Endothelial cell of umbilical vein (primary cell): ENCODE measurements at regions of chr3 and their contacts with region 1.

Region 1: DNA sequence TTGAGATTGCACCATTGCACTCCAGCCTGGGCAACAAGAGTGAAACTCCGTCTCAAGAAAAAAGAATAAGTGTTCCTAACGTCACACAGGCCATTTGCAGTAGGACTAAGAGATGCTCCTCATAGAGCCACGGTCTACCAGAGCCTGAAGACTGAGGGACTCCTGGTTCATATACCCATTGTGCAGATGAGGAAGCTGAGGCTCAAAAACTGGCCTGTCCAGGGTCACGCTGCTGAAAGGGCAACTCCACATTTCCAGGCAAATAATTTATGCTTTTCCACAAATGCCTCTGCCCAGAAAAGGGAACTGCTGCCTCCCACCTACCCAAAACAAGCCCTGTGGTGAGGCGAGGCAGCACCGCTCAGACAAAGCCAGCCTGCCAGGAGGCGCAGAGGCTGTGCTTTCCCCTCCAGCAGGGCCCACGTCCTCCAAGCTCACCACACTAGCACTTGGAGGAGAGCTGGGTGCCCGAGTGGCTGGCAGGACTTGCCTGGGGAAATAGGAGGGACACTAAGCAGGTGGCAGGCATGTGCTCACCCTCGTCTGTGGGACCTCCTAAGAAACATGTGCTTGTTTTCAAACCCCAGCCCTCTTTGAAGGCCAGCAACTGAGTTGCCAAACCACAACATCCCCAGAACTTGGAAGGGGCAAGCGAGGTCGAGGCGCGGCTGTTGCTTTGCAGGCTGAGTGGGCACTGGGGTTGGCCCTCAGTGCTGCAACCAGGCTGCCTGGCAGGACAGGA is 195.6 kb downstream of the XXYLT1 start:
- DNase-seq: no peak
- H3K4me3 ChIP-seq: no peak overlapping the region
- H3K27ac ChIP-seq: no peak overlapping the region
- H3K4me1 ChIP-seq: peaks cover 7% of the 10 kb centered on the region
- H3K27me3 ChIP-seq: no peaks in the 10 kb centered on the region
- CTCF ChIP-seq: no peak
- POLR2A ChIP-seq: no peak

Region 2: DNA sequence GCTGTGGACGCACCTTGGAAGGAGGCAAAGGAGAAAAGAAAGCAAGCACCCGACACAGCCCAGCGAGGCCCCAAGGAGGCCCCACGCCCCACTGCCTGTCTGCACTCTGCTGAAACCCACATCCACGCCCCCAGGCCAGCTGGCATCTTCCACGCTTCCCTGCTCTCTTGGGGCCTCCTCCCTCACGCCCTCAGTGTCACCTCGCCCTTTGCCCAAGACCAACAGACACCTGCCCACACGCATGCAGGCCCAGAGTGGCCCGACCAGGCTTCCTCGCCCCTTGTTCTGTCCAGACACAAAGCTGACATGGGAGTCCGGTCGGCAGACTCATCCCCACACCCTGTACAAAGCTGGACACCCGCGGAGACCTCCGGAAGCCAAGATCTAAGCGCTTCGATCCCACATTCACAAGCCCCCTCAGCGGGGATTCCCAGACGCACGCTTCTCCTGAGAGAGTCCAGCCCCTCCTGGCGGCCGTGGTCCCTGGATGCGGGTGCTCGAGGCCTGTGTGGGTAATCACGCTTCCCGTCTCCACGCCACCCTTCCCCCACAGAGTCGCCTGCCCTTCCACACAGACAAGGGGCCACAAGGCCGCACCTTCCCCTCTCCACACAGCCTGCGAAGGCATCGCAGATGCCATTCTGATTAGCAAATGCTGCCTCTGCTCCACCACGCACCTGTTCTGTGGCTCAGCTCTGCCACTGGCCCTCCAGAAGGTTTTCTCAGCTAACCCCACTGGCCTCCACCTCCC is 19.0 kb after region 1 on chr3:
- CTCF ChIA-PET with region 1: no interaction called
- POLR2A ChIA-PET with region 1: no interaction called
- dilution Hi-C with region 1: no loop called
- intact Hi-C with region 1: no loop called
- DNase-seq: no peak
- H3K4me3 ChIP-seq: no peak overlapping the region
- H3K27ac ChIP-seq: no peak overlapping the region
- H3K4me1 ChIP-seq: peaks cover 7% of the 10 kb centered on the region
- H3K27me3 ChIP-seq: no peaks in the 10 kb centered on the region
- CTCF ChIP-seq: no peak
- POLR2A ChIP-seq: no peak

Region 3: GRCh38 chr3:195282961-195283360 is 207.6 kb after region 1 on chr3:
- CTCF ChIA-PET with region 1: no interaction called
- POLR2A ChIA-PET with region 1: no interaction called
- dilution Hi-C with region 1: no loop called
- intact Hi-C with region 1: no loop called
- DNase-seq: no peak
- H3K4me3 ChIP-seq: no peak overlapping the region
- H3K27ac ChIP-seq: no peak overlapping the region
- H3K4me1 ChIP-seq: peaks cover 15% of the 10 kb centered on the region
- H3K27me3 ChIP-seq: no peaks in the 10 kb centered on the region
- CTCF ChIP-seq: no peak
- POLR2A ChIP-seq: no peak

Region 4: GRCh38 chr3:195815169-195815771 is 739.9 kb after region 1 on chr3:
- CTCF ChIA-PET with region 1: no interaction called
- POLR2A ChIA-PET with region 1: no interaction called
- dilution Hi-C with region 1: no loop called
- intact Hi-C with region 1: loop called (anchors 10 kb)
- DNase-seq: no peak
- H3K4me3 ChIP-seq: no peak overlapping the region
- H3K27ac ChIP-seq: no peak overlapping the region
- H3K4me1 ChIP-seq: no peaks in the 10 kb centered on the region
- H3K27me3 ChIP-seq: no peaks in the 10 kb centered on the region
- CTCF ChIP-seq: no peak
- POLR2A ChIP-seq: no peak